Natural killer cell (primary cell): ENCODE measurements at regions of chr12 and their contacts with region 1.

Region 1: DNA sequence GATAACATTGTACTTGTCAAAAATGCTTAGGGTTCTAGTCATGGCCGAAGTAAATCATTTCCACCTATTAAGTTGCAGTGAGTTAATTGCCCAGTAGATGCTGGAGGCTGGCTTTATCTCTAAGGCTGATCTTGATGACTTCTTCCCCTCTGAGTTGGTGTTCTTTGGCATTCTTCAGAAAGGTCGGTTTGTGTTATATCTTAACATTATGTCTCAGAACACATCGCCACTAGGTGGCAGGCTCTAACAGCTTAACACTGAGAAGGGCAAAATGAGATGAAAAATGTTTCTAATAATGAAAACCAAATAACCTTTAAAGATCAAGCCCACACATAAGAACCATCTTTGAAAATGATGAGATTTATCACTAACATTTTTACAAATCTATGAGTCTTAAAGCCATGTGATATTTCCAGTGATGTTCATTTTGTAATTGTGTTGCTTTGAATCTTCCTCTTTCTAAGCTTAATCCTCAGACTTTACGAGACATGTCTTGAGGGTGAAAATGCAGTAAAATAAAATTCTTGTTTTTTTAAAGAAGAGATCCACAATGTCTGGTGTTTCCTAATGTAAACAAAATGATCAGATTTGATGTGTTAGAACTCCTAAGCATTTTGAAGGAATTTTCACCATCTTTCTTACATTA is 28.6 kb downstream of the SUDS3 start:
- DNase-seq: peak; percentile 24 to 67
- ATAC-seq: peak in 2 of 3 donors; percentile 53 to 68
- H3K4me3 ChIP-seq: no peak overlapping the region
- H3K4me3 Mint-ChIP-seq: no peak overlapping the region
- H3K27ac ChIP-seq: no peak overlapping the region
- H3K27ac Mint-ChIP-seq: no peak overlapping the region
- H3K4me1 ChIP-seq: no peaks in the 10 kb centered on the region
- H3K4me1 Mint-ChIP-seq: no peaks in the 10 kb centered on the region
- H3K27me3 ChIP-seq: no peaks in the 10 kb centered on the region
- H3K27me3 Mint-ChIP-seq: no peaks in the 10 kb centered on the region
- CTCF ChIP-seq: peak; percentile 82

Region 2: DNA sequence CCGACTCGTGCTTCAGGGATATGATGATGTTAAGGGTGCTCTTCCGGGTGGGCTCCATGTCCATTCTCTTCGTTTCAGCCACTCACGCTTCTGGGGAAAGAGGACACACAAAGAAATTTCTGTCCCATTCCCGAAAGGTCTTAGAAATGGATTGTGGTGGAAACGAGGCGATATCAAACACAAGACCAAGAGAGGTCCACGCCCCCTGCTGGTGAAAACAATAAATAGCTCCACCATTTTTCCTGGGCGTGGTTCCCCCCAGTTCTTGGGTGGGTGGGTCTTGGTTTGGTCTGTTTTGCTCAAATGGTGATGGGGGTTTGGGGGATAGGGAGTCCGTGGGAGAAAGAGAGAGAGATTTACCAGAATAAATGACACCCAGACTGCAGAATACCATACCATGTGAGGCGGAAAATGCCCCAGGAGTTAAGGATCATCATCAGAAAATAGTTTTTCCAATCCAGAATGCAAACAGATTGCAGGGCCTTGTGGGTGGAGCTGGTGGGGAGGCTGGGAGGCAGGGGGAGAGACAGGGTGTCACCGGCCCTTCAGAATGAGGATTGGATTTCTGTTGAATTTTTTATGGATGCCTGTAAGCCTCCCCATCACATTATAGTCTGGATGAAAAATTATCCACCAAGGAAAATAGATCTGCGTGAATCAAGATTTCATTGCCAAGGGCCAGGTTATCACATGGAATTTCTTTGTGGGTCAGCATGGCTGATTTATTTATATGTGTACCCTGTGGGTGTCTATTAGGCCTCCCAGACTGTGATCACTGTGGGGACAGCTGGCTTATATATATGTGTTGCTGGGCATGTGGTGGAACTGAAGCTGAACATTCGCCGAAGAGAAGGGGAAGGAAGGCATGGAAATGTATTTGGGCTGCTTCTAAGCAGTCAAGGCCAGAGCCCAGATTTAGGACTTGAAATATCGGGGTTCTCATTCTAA is 632.2 kb after region 1 on chr12:
- intact Hi-C with region 1: loop called (anchors 5 kb)
- DNase-seq: peak in 1 of 2 donors; percentile 22
- ATAC-seq: no peak
- H3K4me3 ChIP-seq: no peak overlapping the region
- H3K4me3 Mint-ChIP-seq: no peak overlapping the region
- H3K27ac ChIP-seq: no peak overlapping the region
- H3K27ac Mint-ChIP-seq: no peak overlapping the region
- H3K4me1 ChIP-seq: no peaks in the 10 kb centered on the region
- H3K4me1 Mint-ChIP-seq: peaks cover 0 to 4% of the 10 kb centered on the region in 2 donors
- H3K27me3 ChIP-seq: no peaks in the 10 kb centered on the region
- H3K27me3 Mint-ChIP-seq: peaks cover 0 to 10% of the 10 kb centered on the region in 2 donors
- CTCF ChIP-seq: peak; percentile 17

Region 3: DNA sequence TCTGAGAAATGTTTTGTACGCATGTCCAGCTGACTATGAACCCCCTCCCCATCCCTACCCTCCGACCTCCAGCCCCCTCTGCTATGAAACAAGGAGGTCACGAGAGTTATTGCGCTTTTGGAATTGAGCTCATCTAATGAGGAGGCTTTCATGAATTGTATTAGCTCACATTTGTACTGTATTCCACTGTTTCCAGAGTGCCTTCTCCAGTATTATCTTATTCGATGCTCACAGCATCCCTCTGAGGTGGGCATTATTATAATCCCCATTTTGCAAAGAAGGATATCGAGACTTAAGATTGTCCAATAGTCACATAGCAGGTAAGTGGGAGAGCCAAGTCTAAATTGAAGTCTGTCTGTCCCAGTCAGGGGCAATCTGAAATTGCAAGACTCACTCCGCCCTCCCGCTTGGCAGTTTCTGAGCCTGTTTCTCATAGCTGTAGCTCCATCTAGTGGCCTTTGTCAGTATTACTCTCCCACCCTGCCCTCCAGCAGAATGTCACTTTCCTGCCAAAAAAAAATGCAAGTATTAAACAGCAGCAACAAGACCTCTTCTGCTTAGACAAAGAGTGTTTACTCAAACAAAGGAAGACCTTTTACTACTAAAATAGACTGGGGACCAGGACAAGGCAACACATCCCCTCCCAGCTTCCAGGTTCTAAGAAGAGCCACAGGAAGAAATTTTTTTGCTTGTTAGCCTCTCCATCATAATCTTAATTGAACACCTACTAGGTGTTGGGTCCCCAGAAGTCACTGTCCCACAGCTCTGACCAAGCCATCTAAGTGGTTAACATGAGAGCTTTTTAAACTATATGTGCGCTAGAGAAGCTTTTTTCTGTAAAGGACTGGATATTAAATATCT is 1140.0 kb after region 1 on chr12:
- intact Hi-C with region 1: loop called (anchors 10 kb)
- DNase-seq: peak; percentile 21 to 75
- ATAC-seq: peak; percentile 54 to 84 (median 71)
- H3K4me3 ChIP-seq: no peak overlapping the region
- H3K4me3 Mint-ChIP-seq: no peak overlapping the region
- H3K27ac ChIP-seq: no peak overlapping the region
- H3K27ac Mint-ChIP-seq: no peak overlapping the region
- H3K4me1 ChIP-seq: no peaks in the 10 kb centered on the region
- H3K4me1 Mint-ChIP-seq: no peaks in the 10 kb centered on the region
- H3K27me3 ChIP-seq: no peaks in the 10 kb centered on the region
- H3K27me3 Mint-ChIP-seq: peaks cover 25 to 26% of the 10 kb centered on the region in 2 donors
- CTCF ChIP-seq: peak; percentile 85

Region 4: GRCh38 chr12:119667577-119668323 is 1262.8 kb after region 1 on chr12 and contains the start of gene PRKAB1:
- intact Hi-C with region 1: loop called (anchors 10 kb)
- DNase-seq: peak; percentile 93 to 99
- ATAC-seq: peak; percentile 90 to 98 (median 92)
- H3K4me3 ChIP-seq: peak within 1 kb of the TSS; percentile 96
- H3K4me3 Mint-ChIP-seq: peak within 1 kb of the TSS; percentile 84
- H3K27ac ChIP-seq: peak within 1 kb of the TSS; percentile 93
- H3K27ac Mint-ChIP-seq: peak within 1 kb of the TSS; percentile 92
- H3K4me1 ChIP-seq: peaks cover 21% of the 10 kb centered on the region
- H3K4me1 Mint-ChIP-seq: peaks cover 51 to 63% of the 10 kb centered on the region in 2 donors
- H3K27me3 ChIP-seq: no peaks in the 10 kb centered on the region
- H3K27me3 Mint-ChIP-seq: no peaks in the 10 kb centered on the region
- CTCF ChIP-seq: peak; percentile 92
- total RNA-seq, gene PRKAB1: 21.8 to 34.6 (median 23.5) TPM